Panc1 (cell line): ENCODE measurements at regions of chr5 and their contacts with region 1.

Region 1: GRCh38 chr5:115516372-115516771 is 28.2 kb downstream of the FEM1C start:
- DNase-seq: no peak
- ATAC-seq: no peak
- H3K4me3 ChIP-seq: no peak overlapping the region
- H3K27ac ChIP-seq: no peak overlapping the region
- H3K4me1 ChIP-seq: no peaks in the 10 kb centered on the region
- H3K27me3 ChIP-seq: no peaks in the 10 kb centered on the region
- CTCF ChIP-seq: no peak

Region 2: DNA sequence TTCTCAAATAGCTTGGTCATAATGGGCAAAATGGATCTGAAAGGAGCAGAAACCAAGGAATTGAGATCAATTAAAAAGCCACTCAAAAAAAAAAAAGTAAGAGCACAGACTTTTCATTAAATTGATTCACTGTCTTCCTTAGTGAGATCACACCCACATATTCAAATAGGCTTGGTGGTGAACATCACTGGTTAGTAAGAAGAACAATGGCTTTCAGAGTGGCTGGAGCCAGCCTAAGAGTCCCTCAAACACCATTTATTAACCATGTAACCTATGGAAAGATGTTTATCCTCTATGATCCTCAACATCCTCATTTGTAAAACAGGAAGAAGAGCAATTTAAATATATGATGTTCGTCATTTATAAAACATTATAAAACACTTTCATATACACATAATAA is 232.4 kb before region 1 on chr5:
- CTCF ChIA-PET with region 1: no interaction called
- POLR2A ChIA-PET with region 1: no interaction called
- in situ Hi-C with region 1: no loop called
- intact Hi-C with region 1: no loop called
- DNase-seq: no peak
- ATAC-seq: no peak
- H3K4me3 ChIP-seq: no peak overlapping the region
- H3K27ac ChIP-seq: no peak overlapping the region
- H3K4me1 ChIP-seq: no peaks in the 10 kb centered on the region
- H3K27me3 ChIP-seq: no peaks in the 10 kb centered on the region
- CTCF ChIP-seq: no peak

Region 3: DNA sequence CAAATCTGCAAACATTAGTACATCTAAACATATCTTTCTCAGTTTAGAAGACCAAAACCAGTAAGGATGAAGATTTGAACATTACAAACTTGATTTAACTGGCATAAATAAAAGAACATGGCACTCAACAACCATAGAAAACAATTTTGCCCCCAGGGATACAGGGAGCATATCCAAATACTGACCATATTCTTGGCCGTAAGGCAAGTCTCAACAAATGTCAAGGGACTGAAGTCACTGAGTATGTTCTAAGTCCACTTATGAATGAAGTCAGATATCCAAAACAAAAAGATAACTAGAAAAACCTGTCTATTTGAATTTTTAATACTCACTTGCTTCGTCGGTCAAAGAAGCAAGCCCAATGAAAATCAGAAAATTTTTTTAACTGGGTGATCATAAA is 14.1 kb after region 1 on chr5:
- CTCF ChIA-PET with region 1: no interaction called
- POLR2A ChIA-PET with region 1: interaction called, 12 read pairs
- in situ Hi-C with region 1: no loop called
- intact Hi-C with region 1: no loop called
- DNase-seq: no peak
- ATAC-seq: no peak
- H3K4me3 ChIP-seq: no peak overlapping the region
- H3K27ac ChIP-seq: no peak overlapping the region
- H3K4me1 ChIP-seq: peaks cover 5% of the 10 kb centered on the region; the same call in 1 of the 2 replicates
- H3K27me3 ChIP-seq: no peaks in the 10 kb centered on the region
- CTCF ChIP-seq: no peak

Region 4: GRCh38 chr5:115709585-115709984 is 193.2 kb after region 1 on chr5:
- CTCF ChIA-PET with region 1: no interaction called
- POLR2A ChIA-PET with region 1: no interaction called
- in situ Hi-C with region 1: no loop called
- intact Hi-C with region 1: no loop called
- DNase-seq: no peak
- ATAC-seq: no peak
- H3K4me3 ChIP-seq: no peak overlapping the region
- H3K27ac ChIP-seq: no peak overlapping the region
- H3K4me1 ChIP-seq: no peaks in the 10 kb centered on the region
- H3K27me3 ChIP-seq: no peaks in the 10 kb centered on the region
- CTCF ChIP-seq: no peak

Region 5: GRCh38 chr5:115798252-115798651 is 281.9 kb after region 1 on chr5:
- CTCF ChIA-PET with region 1: no interaction called
- POLR2A ChIA-PET with region 1: no interaction called
- in situ Hi-C with region 1: no loop called
- intact Hi-C with region 1: no loop called
- DNase-seq: no peak
- ATAC-seq: no peak
- H3K4me3 ChIP-seq: no peak overlapping the region
- H3K27ac ChIP-seq: no peak overlapping the region
- H3K4me1 ChIP-seq: no peaks in the 10 kb centered on the region
- H3K27me3 ChIP-seq: no peaks in the 10 kb centered on the region
- CTCF ChIP-seq: no peak